GM12878 (cell line): ENCODE measurements at regions of chr4 and their contacts with region 1.

Region 1: GRCh38 chr4:153344131-153345010 is at the start of gene MND1:
- DNase-seq: no peak
- ATAC-seq: peak; percentile 90
- H3K4me3 ChIP-seq: peak within 1 kb of the TSS; percentile 93
- H3K27ac ChIP-seq: peak within 1 kb of the TSS; percentile 76
- H3K4me1 ChIP-seq: peaks cover 22% of the 10 kb centered on the region; the same call in 1 of the 2 replicates
- H3K27me3 ChIP-seq: no peaks in the 10 kb centered on the region
- CTCF ChIP-seq: peak; percentile 73 to 93 (median 87)
- EP300 ChIP-seq: no peak
- POLR2A ChIP-seq: peak; percentile 87
- RAD21 ChIP-seq: peak; percentile 87
- polyA plus RNA-seq, gene MND1: 51.0 to 55.0 TPM

Region 2: DNA sequence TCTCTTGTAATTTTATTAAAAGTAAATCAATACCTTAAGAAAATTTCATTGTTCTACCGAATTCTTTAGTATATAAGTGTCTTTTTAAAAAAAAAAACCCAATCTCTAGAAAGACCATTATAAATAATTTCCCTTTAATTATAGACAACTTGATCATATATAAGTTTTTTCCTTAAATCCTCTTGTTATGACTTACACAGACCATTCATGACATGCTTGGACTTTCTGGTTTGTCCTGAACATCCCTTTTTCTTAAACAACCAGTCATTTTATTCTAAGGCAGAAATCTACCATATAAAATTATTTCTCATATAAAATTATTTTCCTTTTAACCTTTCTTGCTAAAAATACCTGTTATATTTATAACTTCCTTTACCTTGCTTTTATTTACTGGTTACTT is 423.6 kb before region 1 on chr4:
- CTCF ChIA-PET with region 1: no interaction called
- POLR2A ChIA-PET with region 1: no interaction called
- RAD21 ChIA-PET with region 1: no interaction called
- SMC1A ChIA-PET with region 1: no interaction called
- in situ Hi-C with region 1: no loop called
- intact Hi-C with region 1: no loop called
- DNase-seq: no peak
- ATAC-seq: no peak
- H3K4me3 ChIP-seq: no peak overlapping the region
- H3K27ac ChIP-seq: no peak overlapping the region
- H3K4me1 ChIP-seq: no peaks in the 10 kb centered on the region
- H3K27me3 ChIP-seq: no peaks in the 10 kb centered on the region
- CTCF ChIP-seq: no peak
- EP300 ChIP-seq: no peak
- POLR2A ChIP-seq: no peak
- RAD21 ChIP-seq: no peak

Region 3: GRCh38 chr4:153426207-153426885 is 82.0 kb after region 1 on chr4:
- CTCF ChIA-PET with region 1: interaction called, 4 read pairs
- POLR2A ChIA-PET with region 1: interaction called, 3 read pairs
- RAD21 ChIA-PET with region 1: interaction called, 9 read pairs
- SMC1A ChIA-PET with region 1: interaction called, 35 read pairs
- in situ Hi-C with region 1: no loop called
- intact Hi-C with region 1: no loop called
- DNase-seq: no peak
- ATAC-seq: peak; percentile 58
- H3K4me3 ChIP-seq: no peak overlapping the region
- H3K27ac ChIP-seq: 0 out of 2 replicates have a peak overlapping the region, but pooled peaks have one; percentile 4
- H3K4me1 ChIP-seq: peaks cover 20% of the 10 kb centered on the region
- H3K27me3 ChIP-seq: no peaks in the 10 kb centered on the region
- CTCF ChIP-seq: no peak
- EP300 ChIP-seq: no peak
- POLR2A ChIP-seq: no peak
- RAD21 ChIP-seq: no peak

Region 4: GRCh38 chr4:153438916-153439756 is 94.8 kb after region 1 on chr4:
- CTCF ChIA-PET with region 1: interaction called, 31 read pairs
- POLR2A ChIA-PET with region 1: interaction called, 4 read pairs
- RAD21 ChIA-PET with region 1: interaction called, 4 read pairs
- SMC1A ChIA-PET with region 1: interaction called, 35 read pairs
- in situ Hi-C with region 1: no loop called
- intact Hi-C with region 1: no loop called
- DNase-seq: peak; percentile 79
- ATAC-seq: peak; percentile 76
- H3K4me3 ChIP-seq: peak overlapping the region; percentile 65
- H3K27ac ChIP-seq: peak overlapping the region; percentile 80
- H3K4me1 ChIP-seq: peaks cover 38% of the 10 kb centered on the region
- H3K27me3 ChIP-seq: no peaks in the 10 kb centered on the region
- CTCF ChIP-seq: 0 out of 6 replicates have a peak, but pooled peaks of 1 of the 3 experiments have one; percentile 4
- EP300 ChIP-seq: no peak
- POLR2A ChIP-seq: no peak
- RAD21 ChIP-seq: no peak

Region 5: DNA sequence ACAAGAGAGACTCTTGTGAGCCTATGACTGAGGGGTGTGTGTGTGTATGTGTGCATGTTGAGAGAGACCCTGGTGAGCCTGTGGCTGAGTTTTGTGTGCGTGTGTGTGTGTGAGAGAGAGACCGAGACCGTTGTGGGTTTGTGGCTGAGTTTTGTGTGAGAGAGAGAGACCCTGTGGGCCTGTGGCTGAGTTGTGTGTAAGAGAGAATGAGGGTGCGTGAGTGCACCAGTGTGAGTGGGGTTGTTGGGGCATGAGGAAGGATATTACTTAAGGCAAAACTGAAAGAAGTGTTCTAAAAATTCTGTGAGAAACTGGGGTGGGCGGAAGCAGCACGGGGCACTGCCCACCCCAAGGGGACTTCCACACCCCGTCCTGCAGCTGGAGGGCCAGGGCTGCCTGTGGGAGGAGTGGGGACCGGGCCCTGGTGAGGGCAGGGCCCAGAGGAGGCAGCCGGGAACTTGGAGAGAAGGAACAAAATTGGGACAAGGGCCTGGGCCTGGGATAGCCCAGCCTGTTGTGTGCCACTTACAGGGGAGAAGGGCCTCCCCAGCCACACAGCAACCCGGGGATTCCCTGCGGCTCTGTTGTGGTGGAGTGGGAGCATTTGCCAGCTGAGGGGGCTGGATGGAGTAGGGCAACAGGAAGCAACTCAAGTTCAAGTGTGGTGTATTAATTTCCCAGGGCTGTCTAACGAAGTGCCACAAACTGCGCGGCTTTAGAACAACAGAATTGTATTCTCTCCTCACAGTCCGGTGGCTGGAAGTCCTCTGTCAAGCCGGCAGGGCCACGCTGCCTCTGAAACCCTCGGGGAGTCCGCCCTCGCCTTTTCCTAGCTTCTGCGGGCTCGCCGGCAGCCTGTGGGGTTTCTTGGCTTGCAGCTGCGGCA is 143.9 kb after region 1 on chr4:
- CTCF ChIA-PET with region 1: interaction called, 14 read pairs
- POLR2A ChIA-PET with region 1: interaction called, 5 read pairs
- RAD21 ChIA-PET with region 1: interaction called, 4 read pairs
- SMC1A ChIA-PET with region 1: interaction called, 6 read pairs
- in situ Hi-C with region 1: no loop called
- intact Hi-C with region 1: loop called (anchors 5 kb)
- DNase-seq: peak; percentile 94
- ATAC-seq: peak; percentile 63
- H3K4me3 ChIP-seq: peak overlapping the region; percentile 85
- H3K27ac ChIP-seq: peak overlapping the region; percentile 81
- H3K4me1 ChIP-seq: peaks cover 32% of the 10 kb centered on the region
- H3K27me3 ChIP-seq: no peaks in the 10 kb centered on the region
- CTCF ChIP-seq: no peak
- EP300 ChIP-seq: peak; percentile 32 to 66; a peak in 2 of 4 replicates
- POLR2A ChIP-seq: peak; percentile 70
- RAD21 ChIP-seq: no peak

Region 6: GRCh38 chr4:153573881-153574802 is 229.8 kb after region 1 on chr4:
- CTCF ChIA-PET with region 1: interaction called, 20 read pairs
- POLR2A ChIA-PET with region 1: no interaction called
- RAD21 ChIA-PET with region 1: interaction called, 14 read pairs
- SMC1A ChIA-PET with region 1: interaction called, 12 read pairs
- in situ Hi-C with region 1: loop called (anchors 5 kb)
- intact Hi-C with region 1: loop called (anchors 1 kb)
- DNase-seq: no peak
- ATAC-seq: peak; percentile 60
- H3K4me3 ChIP-seq: no peak overlapping the region
- H3K27ac ChIP-seq: peak overlapping the region; percentile 48
- H3K4me1 ChIP-seq: peaks cover 50% of the 10 kb centered on the region
- H3K27me3 ChIP-seq: no peaks in the 10 kb centered on the region
- CTCF ChIP-seq: peak; percentile 41 to 65 (median 53)
- EP300 ChIP-seq: no peak
- POLR2A ChIP-seq: no peak
- RAD21 ChIP-seq: peak; percentile 81

Region 7: GRCh38 chr4:153643406-153644383 is 299.3 kb after region 1 on chr4:
- CTCF ChIA-PET with region 1: interaction called, 142 read pairs
- POLR2A ChIA-PET with region 1: no interaction called
- RAD21 ChIA-PET with region 1: interaction called, 77 read pairs
- SMC1A ChIA-PET with region 1: interaction called, 97 read pairs
- in situ Hi-C with region 1: no loop called
- intact Hi-C with region 1: loop called (anchors 1 kb)
- DNase-seq: peak; percentile 50
- ATAC-seq: peak; percentile 88
- H3K4me3 ChIP-seq: no peak overlapping the region
- H3K27ac ChIP-seq: no peak overlapping the region
- H3K4me1 ChIP-seq: peaks cover 6% of the 10 kb centered on the region; the same call in 1 of the 2 replicates
- H3K27me3 ChIP-seq: no peaks in the 10 kb centered on the region
- CTCF ChIP-seq: peak; percentile 50 to 65 (median 54); a peak in 5 of 6 replicates
- EP300 ChIP-seq: no peak
- POLR2A ChIP-seq: no peak
- RAD21 ChIP-seq: peak; percentile 78

Region 8: GRCh38 chr4:153750197-153750817 is 405.9 kb after region 1 on chr4:
- CTCF ChIA-PET with region 1: interaction called, 14 read pairs
- POLR2A ChIA-PET with region 1: no interaction called
- RAD21 ChIA-PET with region 1: interaction called, 14 read pairs
- SMC1A ChIA-PET with region 1: interaction called, 12 read pairs
- in situ Hi-C with region 1: loop called (anchors 10 kb)
- intact Hi-C with region 1: loop called (anchors 1 kb)
- DNase-seq: peak; percentile 31
- ATAC-seq: peak; percentile 94
- H3K4me3 ChIP-seq: no peak overlapping the region
- H3K27ac ChIP-seq: no peak overlapping the region
- H3K4me1 ChIP-seq: no peaks in the 10 kb centered on the region
- H3K27me3 ChIP-seq: no peaks in the 10 kb centered on the region
- CTCF ChIP-seq: peak; percentile 69 to 81 (median 72)
- EP300 ChIP-seq: no peak
- POLR2A ChIP-seq: no peak
- RAD21 ChIP-seq: peak; percentile 84